ENCODE measurements at regions of chr2 and their contacts with region 1.

Region 1: GRCh38 chr2:121333834-121334558 is 49.0 kb upstream of the TFCP2L1 start:
- DNase-seq: no peak
- H3K4me3 ChIP-seq: no peak overlapping the region
- H3K27ac ChIP-seq: no peak overlapping the region
- H3K4me1 ChIP-seq: peaks cover 0 to 11% (median 8%) of the 10 kb centered on the region in 4 experiments; a peak in 5 of 7 replicates
- H3K27me3 ChIP-seq: no peaks in the 10 kb centered on the region
- CTCF ChIP-seq: no peak
- EP300 ChIP-seq: no peak
- POLR2A ChIP-seq: no peak
- RAD21 ChIP-seq: no peak

Region 2: GRCh38 chr2:121276341-121276740 is 57.7 kb before region 1 on chr2:
- CTCF ChIA-PET with region 1: no interaction called
- POLR2A ChIA-PET with region 1: no interaction called
- DNase-seq: no peak
- H3K4me3 ChIP-seq: no peak overlapping the region
- H3K27ac ChIP-seq: no peak overlapping the region
- H3K4me1 ChIP-seq: no peaks in the 10 kb centered on the region
- H3K27me3 ChIP-seq: no peaks in the 10 kb centered on the region
- CTCF ChIP-seq: no peak
- EP300 ChIP-seq: no peak
- POLR2A ChIP-seq: no peak
- RAD21 ChIP-seq: no peak

Region 3: DNA sequence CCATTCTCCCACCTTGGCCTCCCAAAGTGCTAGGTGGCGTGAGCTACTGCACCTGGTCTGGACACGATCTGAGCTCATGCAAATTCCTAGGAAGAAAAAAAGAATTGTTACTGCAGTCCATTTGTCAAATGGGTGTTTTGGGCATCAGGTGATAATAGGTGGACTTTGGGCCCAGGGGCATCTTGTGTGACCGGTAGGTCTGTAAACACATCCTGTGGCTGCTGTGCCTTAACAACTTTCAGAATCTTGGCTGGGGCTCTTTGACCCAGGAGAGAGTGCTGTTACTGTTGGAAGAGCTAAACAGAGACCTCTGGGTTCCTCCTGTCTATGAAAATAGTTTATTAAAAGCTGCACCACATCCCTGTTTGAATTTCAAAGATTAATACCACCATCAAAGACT is 14.0 kb before region 1 on chr2:
- CTCF ChIA-PET with region 1: interaction called, 10 read pairs
- POLR2A ChIA-PET with region 1: no interaction called
- DNase-seq: no peak
- H3K4me3 ChIP-seq: no peak overlapping the region
- H3K27ac ChIP-seq: no peak overlapping the region
- H3K4me1 ChIP-seq: no peaks in the 10 kb centered on the region
- H3K27me3 ChIP-seq: no peaks in the 10 kb centered on the region
- CTCF ChIP-seq: no peak
- EP300 ChIP-seq: no peak
- POLR2A ChIP-seq: no peak
- RAD21 ChIP-seq: no peak

Region 4: GRCh38 chr2:121356058-121356640 is 22.2 kb after region 1 on chr2:
- CTCF ChIA-PET with region 1: interaction called, 109 read pairs
- POLR2A ChIA-PET with region 1: interaction called, 7 read pairs
- DNase-seq: peak; percentile 46 to 71
- H3K4me3 ChIP-seq: no peak overlapping the region
- H3K27ac ChIP-seq: no peak overlapping the region
- H3K4me1 ChIP-seq: no peaks in the 10 kb centered on the region
- H3K27me3 ChIP-seq: no peaks in the 10 kb centered on the region
- CTCF ChIP-seq: peak in 2 of 3 experiments; percentile 75 to 85; a peak in 3 of 4 replicates
- EP300 ChIP-seq: no peak
- POLR2A ChIP-seq: no peak
- RAD21 ChIP-seq: peak; percentile 77 to 80

Region 5: GRCh38 chr2:121372721-121373353 is 38.8 kb after region 1 on chr2:
- CTCF ChIA-PET with region 1: no interaction called
- POLR2A ChIA-PET with region 1: no interaction called
- DNase-seq: no peak
- H3K4me3 ChIP-seq: no peak overlapping the region
- H3K27ac ChIP-seq: no peak overlapping the region
- H3K4me1 ChIP-seq: no peaks in the 10 kb centered on the region
- H3K27me3 ChIP-seq: no peaks in the 10 kb centered on the region
- CTCF ChIP-seq: no peak
- EP300 ChIP-seq: no peak
- POLR2A ChIP-seq: no peak
- RAD21 ChIP-seq: no peak

Measured in H1 (cell line).